Activated CD4-positive, alpha-beta memory T cell treated with anti-CD3 and anti-CD28 coated beads for 36 hours (primary cell): ENCODE measurements at regions of chr2 and their contacts with region 1.

Region 1: DNA sequence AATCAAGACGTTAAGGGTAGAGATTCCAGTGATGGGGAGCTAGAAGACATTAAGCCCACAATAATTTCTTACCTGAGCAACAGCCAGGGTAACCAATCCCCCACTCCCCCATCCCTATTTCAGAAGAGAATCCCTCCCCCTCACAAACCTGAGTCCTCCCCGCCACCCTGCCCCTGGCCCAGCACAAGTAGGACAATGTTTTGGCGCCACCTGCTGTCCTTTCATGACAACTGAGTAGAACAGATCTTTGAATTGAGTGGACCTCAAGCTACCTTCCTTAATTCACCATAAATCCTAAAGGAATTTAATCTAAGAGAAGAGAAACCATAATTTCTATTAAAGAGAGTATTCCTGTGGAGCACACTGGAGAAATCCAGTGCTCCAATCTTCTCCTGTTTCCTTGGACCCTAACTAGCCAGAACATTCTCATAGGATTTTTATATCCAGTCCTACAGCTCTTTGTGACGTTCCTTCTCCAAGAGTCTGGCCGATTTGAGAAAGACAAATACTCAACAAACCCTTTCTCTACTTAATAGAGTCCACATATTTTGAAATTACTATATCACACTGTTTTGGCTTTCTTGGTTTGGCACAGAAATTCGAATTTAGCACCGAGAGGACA is 41.1 kb downstream of the NHEJ1 start:
- DNase-seq: peak; percentile 71
- H3K4me3 Mint-ChIP-seq: no peak overlapping the region
- H3K27ac Mint-ChIP-seq: no peak overlapping the region
- H3K4me1 Mint-ChIP-seq: peaks cover 7% of the 10 kb centered on the region
- H3K27me3 Mint-ChIP-seq: no peaks in the 10 kb centered on the region

Region 2: DNA sequence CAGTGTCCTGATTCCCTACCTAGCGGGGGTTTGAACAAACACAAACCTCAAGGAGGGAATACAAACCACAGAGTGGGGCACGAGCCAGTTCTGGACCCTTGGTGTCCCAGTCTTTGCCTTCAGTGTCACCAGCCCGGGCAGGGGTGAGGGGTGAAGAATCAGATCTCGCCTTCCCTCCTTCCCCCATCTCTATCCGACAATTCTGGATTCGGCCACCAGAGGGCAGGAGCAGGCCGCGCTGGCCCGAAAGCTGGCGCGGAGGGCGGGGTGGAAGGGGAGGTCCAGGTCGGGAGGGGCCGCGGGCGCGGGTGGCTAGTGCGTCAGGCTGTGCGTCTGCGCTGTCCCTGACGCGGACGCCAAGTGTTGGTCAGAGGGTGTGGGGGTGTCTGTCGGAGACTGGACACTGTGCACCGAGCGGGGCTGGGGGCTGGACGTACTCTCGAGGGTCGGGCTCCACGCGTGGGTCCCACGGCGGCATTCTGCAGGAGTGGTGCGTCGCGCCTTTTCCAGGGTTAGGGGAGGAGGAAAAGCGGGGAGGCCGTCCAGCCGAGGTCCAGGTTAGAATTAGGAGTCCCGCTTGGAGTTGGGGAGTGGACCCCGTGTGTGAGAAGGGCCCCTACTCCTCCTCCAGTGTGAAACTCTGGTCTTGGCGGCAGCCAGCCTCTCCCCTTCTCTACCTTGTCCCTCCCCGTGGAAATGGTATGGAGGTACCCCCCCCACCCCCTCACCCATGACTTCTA is 123.4 kb before region 1 on chr2:
- CTCF ChIA-PET with region 1: interaction called, 13 read pairs
- POLR2A ChIA-PET with region 1: no interaction called
- intact Hi-C with region 1: no loop called
- DNase-seq: peak; percentile 86
- H3K4me3 Mint-ChIP-seq: no peak overlapping the region
- H3K27ac Mint-ChIP-seq: no peak overlapping the region
- H3K4me1 Mint-ChIP-seq: peaks cover 2% of the 10 kb centered on the region
- H3K27me3 Mint-ChIP-seq: peaks cover 73% of the 10 kb centered on the region

Region 3: GRCh38 chr2:219041252-219041651 is 78.3 kb before region 1 on chr2 and contains the start of gene CFAP65:
- CTCF ChIA-PET with region 1: interaction called, 10 read pairs
- POLR2A ChIA-PET with region 1: no interaction called
- intact Hi-C with region 1: no loop called
- DNase-seq: peak; percentile 52
- H3K4me3 Mint-ChIP-seq: peak within 1 kb of the TSS; percentile 55
- H3K27ac Mint-ChIP-seq: no peak within 1 kb of the TSS
- H3K4me1 Mint-ChIP-seq: peaks cover 10% of the 10 kb centered on the region
- H3K27me3 Mint-ChIP-seq: peaks cover 38% of the 10 kb centered on the region
- total RNA-seq, gene CFAP65: not detected

Region 4: DNA sequence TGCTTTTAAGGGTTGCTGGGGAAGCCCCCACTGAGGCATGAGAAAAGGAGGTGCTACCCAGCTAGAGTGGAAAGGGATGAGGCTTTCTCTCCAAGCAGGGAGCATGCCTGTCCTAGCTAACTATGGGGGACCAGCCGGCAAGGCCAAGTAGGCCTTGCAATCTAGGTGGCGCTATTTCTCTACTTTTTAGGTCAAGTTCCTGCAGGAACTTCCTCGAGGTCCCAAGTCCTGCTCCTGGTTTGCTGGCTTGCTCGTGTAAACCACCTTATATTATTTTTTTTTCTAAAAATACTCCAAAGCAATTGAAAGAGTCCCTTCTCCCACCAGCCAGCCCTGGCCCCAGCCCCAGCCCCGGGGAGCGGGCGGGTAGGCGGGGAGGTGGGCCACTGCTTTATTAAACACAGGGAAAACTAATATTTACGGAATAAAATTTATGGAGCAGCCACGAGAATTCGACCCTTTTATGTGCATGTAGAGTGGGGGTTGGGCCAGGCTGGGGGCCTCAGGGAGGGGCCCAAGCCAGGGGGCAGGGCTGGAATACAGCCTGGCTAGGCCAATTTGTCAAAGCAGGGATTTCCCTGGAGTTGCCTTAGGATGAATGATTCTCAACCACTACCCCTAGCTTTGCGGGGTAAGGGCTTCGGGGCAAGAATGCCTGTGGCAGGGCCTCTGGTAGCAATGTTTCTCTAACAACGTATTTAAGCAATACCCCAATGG is 46.0 kb before region 1 on chr2:
- CTCF ChIA-PET with region 1: interaction called, 166 read pairs
- POLR2A ChIA-PET with region 1: no interaction called
- intact Hi-C with region 1: loop called (anchors 1 kb)
- DNase-seq: peak; percentile 25
- H3K4me3 Mint-ChIP-seq: no peak overlapping the region
- H3K27ac Mint-ChIP-seq: no peak overlapping the region
- H3K4me1 Mint-ChIP-seq: no peaks in the 10 kb centered on the region
- H3K27me3 Mint-ChIP-seq: no peaks in the 10 kb centered on the region

Region 5: GRCh38 chr2:219090436-219091299 is 28.9 kb before region 1 on chr2:
- CTCF ChIA-PET with region 1: interaction called, 10 read pairs
- POLR2A ChIA-PET with region 1: no interaction called
- intact Hi-C with region 1: no loop called
- DNase-seq: no peak
- H3K4me3 Mint-ChIP-seq: no peak overlapping the region
- H3K27ac Mint-ChIP-seq: no peak overlapping the region
- H3K4me1 Mint-ChIP-seq: peaks cover 4% of the 10 kb centered on the region
- H3K27me3 Mint-ChIP-seq: no peaks in the 10 kb centered on the region

Region 6: GRCh38 chr2:219133976-219134375 is 14.4 kb after region 1 on chr2:
- CTCF ChIA-PET with region 1: interaction called, 20 read pairs
- POLR2A ChIA-PET with region 1: interaction called, 3 read pairs
- intact Hi-C with region 1: no loop called
- DNase-seq: no peak
- H3K4me3 Mint-ChIP-seq: no peak overlapping the region
- H3K27ac Mint-ChIP-seq: no peak overlapping the region
- H3K4me1 Mint-ChIP-seq: peaks cover 6% of the 10 kb centered on the region
- H3K27me3 Mint-ChIP-seq: no peaks in the 10 kb centered on the region

Region 7: GRCh38 chr2:219155054-219155644 is 35.6 kb after region 1 on chr2:
- CTCF ChIA-PET with region 1: interaction called, 43 read pairs
- POLR2A ChIA-PET with region 1: no interaction called
- intact Hi-C with region 1: loop called (anchors 5 kb)
- DNase-seq: peak; percentile 31
- H3K4me3 Mint-ChIP-seq: no peak overlapping the region
- H3K27ac Mint-ChIP-seq: no peak overlapping the region
- H3K4me1 Mint-ChIP-seq: peaks cover 8% of the 10 kb centered on the region
- H3K27me3 Mint-ChIP-seq: no peaks in the 10 kb centered on the region

Region 8: DNA sequence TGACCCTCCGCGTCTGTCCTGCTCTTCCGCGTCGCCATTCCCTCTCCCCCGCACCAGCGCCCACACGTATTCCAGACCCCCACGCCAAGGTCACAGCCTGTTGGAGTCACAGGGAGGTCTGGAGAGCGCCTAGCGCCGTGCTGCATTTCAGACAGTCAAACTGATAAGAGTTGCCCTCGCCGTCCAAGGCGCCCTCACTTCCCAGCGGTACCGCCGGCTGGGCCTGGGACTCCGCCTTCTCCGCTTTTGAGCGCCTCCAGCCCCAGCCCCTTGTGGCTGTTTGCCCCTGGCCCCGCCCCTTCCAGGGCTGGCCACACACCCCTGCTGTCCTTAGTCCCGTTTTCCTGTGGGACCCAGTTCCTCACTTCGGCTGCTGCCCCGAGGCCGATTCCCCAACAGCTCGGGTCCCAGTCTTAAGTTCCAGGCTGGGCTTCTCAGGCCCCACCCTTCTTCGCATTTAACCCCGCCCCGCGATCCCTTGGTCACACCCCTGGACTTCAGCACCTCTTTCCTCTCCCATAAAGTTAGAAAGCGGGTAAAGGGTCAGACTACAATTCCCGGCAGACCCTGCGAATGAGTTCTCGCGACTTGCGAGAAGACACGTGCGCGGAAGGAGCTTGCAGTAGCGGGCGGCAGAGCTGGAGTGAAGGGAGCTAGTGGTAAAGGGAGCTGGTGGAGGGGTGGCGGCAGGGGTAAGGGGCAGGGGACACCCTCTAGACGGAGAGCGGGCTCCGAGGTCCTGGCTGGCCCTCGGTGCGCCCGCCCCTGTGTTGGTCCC is 378.9 kb after region 1 on chr2 and contains the start of gene GMPPA:
- CTCF ChIA-PET with region 1: no interaction called
- POLR2A ChIA-PET with region 1: no interaction called
- intact Hi-C with region 1: no loop called
- DNase-seq: peak; percentile 97
- H3K4me3 Mint-ChIP-seq: peak within 1 kb of the TSS; percentile 83
- H3K27ac Mint-ChIP-seq: peak within 1 kb of the TSS; percentile 72
- H3K4me1 Mint-ChIP-seq: peaks cover 38% of the 10 kb centered on the region
- H3K27me3 Mint-ChIP-seq: peaks cover 41% of the 10 kb centered on the region
- total RNA-seq, gene GMPPA: 37.1 to 37.4 TPM